GM18951 (cell line): ENCODE measurements at regions of chr3 and their contacts with region 1.

Region 1: DNA sequence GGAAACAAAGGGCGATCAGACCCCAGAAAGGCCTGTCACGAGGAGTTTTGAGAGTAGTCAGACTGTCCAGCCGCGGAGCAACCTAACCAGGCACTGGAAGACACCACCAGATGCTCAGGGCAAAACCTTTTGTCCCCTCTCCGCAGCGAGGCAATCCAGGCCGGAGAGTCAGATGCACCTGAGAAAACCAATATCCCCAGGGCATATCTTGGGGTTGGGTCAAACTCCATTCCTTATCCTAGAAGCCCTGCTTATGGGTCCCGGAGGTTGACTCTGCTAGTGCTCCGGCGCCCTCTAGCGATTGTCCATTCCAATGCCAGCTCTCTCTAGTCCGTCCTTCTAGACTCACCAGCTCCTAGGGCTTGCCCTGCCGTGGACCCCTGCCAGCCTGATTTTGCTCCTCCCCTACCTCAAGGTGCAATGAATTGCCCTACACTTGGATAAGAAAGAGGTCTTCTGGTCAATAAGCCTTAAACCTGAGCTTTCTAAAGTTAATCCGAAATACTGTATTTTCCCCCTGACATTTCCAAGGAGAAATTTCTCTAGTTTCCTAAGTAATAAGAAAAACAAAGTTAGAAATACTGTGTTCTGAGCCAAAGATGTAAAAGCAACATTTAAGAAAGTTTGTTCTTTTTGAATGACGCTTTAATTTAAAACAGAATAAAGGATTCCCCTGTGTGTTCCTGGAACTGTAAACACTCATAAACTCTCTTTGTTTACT is 5.5 kb downstream of the CPNE4 start:
- POLR2A ChIP-seq: no peak

Region 2: GRCh38 chr3:131231710-131232389 is 797.5 kb before region 1 on chr3:
- in situ Hi-C with region 1: loop called (anchors 25 kb)
- POLR2A ChIP-seq: no peak